Uterus (tissue), 4 donors: ENCODE measurements at regions of chr12 and their contacts with region 1.

Region 1: GRCh38 chr12:98274430-98275130 is 240.8 kb upstream of the TMPO start:
- DNase-seq: no peak
- H3K4me3 ChIP-seq: no peak overlapping the region
- H3K27ac ChIP-seq: no peak overlapping the region
- H3K4me1 ChIP-seq: no peaks in the 10 kb centered on the region
- H3K27me3 ChIP-seq: no peaks in the 10 kb centered on the region
- CTCF ChIP-seq: no peak
- POLR2A ChIP-seq: no peak

Region 2: DNA sequence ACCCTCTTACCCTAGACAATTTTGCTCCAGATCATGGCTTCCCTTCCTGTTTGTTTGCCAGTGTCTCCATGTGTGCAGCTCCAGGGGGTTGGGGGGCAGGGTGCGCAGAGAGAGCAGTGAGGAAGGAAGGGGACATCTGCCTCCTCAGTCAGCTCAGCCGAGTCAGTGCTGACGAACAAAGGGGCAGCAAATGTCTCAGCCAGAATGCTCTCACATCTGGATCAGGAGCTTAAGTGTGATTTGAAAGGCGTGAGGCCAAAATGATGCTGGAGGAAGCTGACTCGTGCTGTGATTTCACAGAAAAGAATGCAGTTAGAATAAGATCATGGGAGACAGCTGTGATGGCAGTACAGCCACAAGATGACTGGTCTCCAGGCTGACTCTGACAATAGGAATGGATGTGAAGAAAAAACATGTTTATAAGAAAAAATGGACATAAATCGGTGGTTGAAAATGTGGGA is 1847.3 kb before region 1 on chr12:
- intact Hi-C with region 1: loop called (anchors 10 kb)
- DNase-seq: peak; percentile 71 to 85
- H3K4me3 ChIP-seq: no peak overlapping the region
- H3K27ac ChIP-seq: peak overlapping the region; percentile 89 to 91
- H3K4me1 ChIP-seq: no peaks in the 10 kb centered on the region
- H3K27me3 ChIP-seq: no peaks in the 10 kb centered on the region
- CTCF ChIP-seq: no peak
- POLR2A ChIP-seq: peak in 1 of 2 donors; percentile 29

Region 3: GRCh38 chr12:98253207-98254037 is 21.2 kb before region 1 on chr12:
- intact Hi-C with region 1: no loop called
- DNase-seq: no peak
- H3K4me3 ChIP-seq: no peak overlapping the region
- H3K27ac ChIP-seq: no peak overlapping the region
- H3K4me1 ChIP-seq: no peaks in the 10 kb centered on the region
- H3K27me3 ChIP-seq: no peaks in the 10 kb centered on the region
- CTCF ChIP-seq: no peak
- POLR2A ChIP-seq: no peak

Region 4: GRCh38 chr12:98369581-98369980 is 95.0 kb after region 1 on chr12:
- intact Hi-C with region 1: no loop called
- DNase-seq: no peak
- H3K4me3 ChIP-seq: no peak overlapping the region
- H3K27ac ChIP-seq: no peak overlapping the region
- H3K4me1 ChIP-seq: no peaks in the 10 kb centered on the region
- H3K27me3 ChIP-seq: no peaks in the 10 kb centered on the region
- CTCF ChIP-seq: no peak
- POLR2A ChIP-seq: no peak

Region 5: GRCh38 chr12:98593351-98594049 is 318.9 kb after region 1 on chr12 and contains the start of gene SLC25A3:
- intact Hi-C with region 1: no loop called
- DNase-seq: peak; percentile 96 to 97
- H3K4me3 ChIP-seq: peak within 1 kb of the TSS; percentile 60 to 87
- H3K27ac ChIP-seq: peak within 1 kb of the TSS; percentile 93 to 96
- H3K4me1 ChIP-seq: peaks cover 0 to 4% of the 10 kb centered on the region in 2 donors
- H3K27me3 ChIP-seq: no peaks in the 10 kb centered on the region
- CTCF ChIP-seq: no peak
- POLR2A ChIP-seq: peak; percentile 82 to 97
- total RNA-seq, gene SLC25A3: 283 to 701 (median 315) TPM